ENCODE measurements at regions of chr3 and their contacts with region 1.

Region 1: DNA sequence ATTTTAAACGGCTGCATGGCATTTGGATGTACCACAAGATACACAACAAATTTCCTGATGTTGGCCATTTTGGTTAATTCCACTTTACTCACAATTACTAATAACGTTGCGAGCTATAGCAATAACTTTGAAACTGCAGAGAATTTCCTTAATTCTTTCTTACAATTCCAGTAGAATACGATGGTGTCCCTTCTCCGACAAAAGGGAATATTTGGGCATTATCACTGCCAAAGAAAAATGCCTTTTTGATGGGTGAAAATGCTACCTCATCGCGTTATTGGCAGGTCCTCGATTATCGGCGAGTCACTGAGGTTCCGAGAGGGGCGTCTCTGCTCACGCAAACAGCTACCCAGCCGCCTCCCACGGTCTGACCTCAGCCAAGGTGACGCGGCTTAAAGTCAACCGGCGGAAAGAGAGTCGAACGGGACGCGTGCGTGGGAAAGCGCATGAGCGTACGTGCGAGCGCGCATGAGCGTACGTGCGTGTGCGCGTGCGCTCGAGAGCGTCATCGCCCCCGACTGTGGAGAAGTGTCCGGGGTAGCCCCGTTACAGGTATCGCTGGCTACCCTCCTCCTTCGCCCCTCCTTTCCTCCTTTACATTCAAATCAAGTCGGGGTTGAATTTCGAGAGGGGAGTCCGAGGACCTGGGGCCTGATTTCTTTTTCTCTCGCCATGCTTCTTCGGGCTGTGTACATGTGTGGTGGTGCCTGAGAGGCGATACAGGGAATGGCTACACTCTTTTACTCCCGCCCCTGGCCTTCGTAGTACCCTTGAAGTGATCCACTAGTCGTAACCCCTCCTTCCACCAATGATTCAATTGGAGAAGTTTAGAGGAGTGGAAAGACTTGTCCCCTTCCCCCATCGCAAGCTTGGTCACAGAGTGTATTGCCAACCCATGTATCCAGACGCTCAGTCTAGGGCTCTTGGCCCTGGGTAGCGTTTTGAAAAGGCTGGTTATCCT is at the start of gene OXSM:
- DNase-seq: peak; percentile 89 to 92
- ATAC-seq: peak; percentile 95 to 98
- H3K4me3 ChIP-seq: peak within 1 kb of the TSS; percentile 64 to 84 (median 68)
- H3K27ac ChIP-seq: peak within 1 kb of the TSS; percentile 88 to 98 (median 94)
- H3K4me1 ChIP-seq: peaks cover 26 to 39% of the 10 kb centered on the region in 2 donors
- H3K27me3 ChIP-seq: no peaks in the 10 kb centered on the region
- CTCF ChIP-seq: no peak
- POLR2A ChIP-seq: peak; percentile 96 to 98
- total RNA-seq, gene OXSM: 5.9 to 26.3 (median 13.3) TPM

Region 2: DNA sequence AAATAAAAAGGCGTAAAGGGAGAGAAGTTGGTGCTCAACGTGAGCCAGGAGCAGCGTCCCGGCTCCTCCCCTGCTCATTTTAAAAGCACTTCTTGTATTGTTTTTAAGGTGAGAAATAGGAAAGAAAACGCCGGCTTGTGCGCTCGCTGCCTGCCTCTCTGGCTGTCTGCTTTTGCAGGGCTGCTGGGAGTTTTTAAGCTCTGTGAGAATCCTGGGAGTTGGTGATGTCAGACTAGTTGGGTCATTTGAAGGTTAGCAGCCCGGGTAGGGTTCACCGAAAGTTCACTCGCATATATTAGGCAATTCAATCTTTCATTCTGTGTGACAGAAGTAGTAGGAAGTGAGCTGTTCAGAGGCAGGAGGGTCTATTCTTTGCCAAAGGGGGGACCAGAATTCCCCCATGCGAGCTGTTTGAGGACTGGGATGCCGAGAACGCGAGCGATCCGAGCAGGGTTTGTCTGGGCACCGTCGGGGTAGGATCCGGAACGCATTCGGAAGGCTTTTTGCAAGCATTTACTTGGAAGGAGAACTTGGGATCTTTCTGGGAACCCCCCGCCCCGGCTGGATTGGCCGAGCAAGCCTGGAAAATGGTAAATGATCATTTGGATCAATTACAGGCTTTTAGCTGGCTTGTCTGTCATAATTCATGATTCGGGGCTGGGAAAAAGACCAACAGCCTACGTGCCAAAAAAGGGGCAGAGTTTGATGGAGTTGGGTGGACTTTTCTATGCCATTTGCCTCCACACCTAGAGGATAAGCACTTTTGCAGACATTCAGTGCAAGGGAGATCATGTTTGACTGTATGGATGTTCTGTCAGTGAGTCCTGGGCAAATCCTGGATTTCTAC is 361.7 kb before region 1 on chr3 and contains the start of gene RARB:
- in situ Hi-C with region 1: loop called in 1 of 4 experiments (anchors 25 kb)
- intact Hi-C with region 1: no loop called
- DNase-seq: peak; percentile 40 to 64
- ATAC-seq: peak; percentile 88 to 94
- H3K4me3 ChIP-seq: peak within 1 kb of the TSS; percentile 64 to 83 (median 72)
- H3K27ac ChIP-seq: peak within 1 kb of the TSS; percentile 80 to 88 (median 82)
- H3K4me1 ChIP-seq: peaks cover 19 to 20% of the 10 kb centered on the region in 2 donors
- H3K27me3 ChIP-seq: no peaks in the 10 kb centered on the region
- CTCF ChIP-seq: no peak
- POLR2A ChIP-seq: peak; percentile 70 to 83
- total RNA-seq, gene RARB: 1.2 to 3.0 (median 1.9) TPM

Region 3: GRCh38 chr3:25468866-25469319 is 321.0 kb before region 1 on chr3:
- in situ Hi-C with region 1: loop called in 2 of 4 experiments (anchors 25 kb)
- intact Hi-C with region 1: no loop called
- DNase-seq: peak; percentile 43 to 49
- ATAC-seq: peak; percentile 61 to 70
- H3K4me3 ChIP-seq: no peak overlapping the region
- H3K27ac ChIP-seq: peak overlapping the region in 3 of 4 donors; percentile 70 to 82 (median 77)
- H3K4me1 ChIP-seq: peaks cover 53 to 83% of the 10 kb centered on the region in 2 donors
- H3K27me3 ChIP-seq: no peaks in the 10 kb centered on the region
- CTCF ChIP-seq: peak; percentile 4 to 47 (median 31)
- POLR2A ChIP-seq: no peak

Region 4: GRCh38 chr3:25655659-25656058 is 134.2 kb before region 1 on chr3:
- in situ Hi-C with region 1: loop called in 2 of 4 experiments (anchors 10 kb)
- intact Hi-C with region 1: no loop called
- DNase-seq: no peak
- ATAC-seq: no peak
- H3K4me3 ChIP-seq: no peak overlapping the region
- H3K27ac ChIP-seq: no peak overlapping the region
- H3K4me1 ChIP-seq: peaks cover 70 to 74% of the 10 kb centered on the region in 2 donors
- H3K27me3 ChIP-seq: no peaks in the 10 kb centered on the region
- CTCF ChIP-seq: no peak
- POLR2A ChIP-seq: no peak

Region 5: GRCh38 chr3:26091096-26091495 is 301.2 kb after region 1 on chr3:
- in situ Hi-C with region 1: no loop called
- intact Hi-C with region 1: no loop called
- DNase-seq: no peak
- ATAC-seq: peak in 1 of 2 donors; percentile 86
- H3K4me3 ChIP-seq: no peak overlapping the region
- H3K27ac ChIP-seq: peak overlapping the region in 3 of 4 donors; percentile 0 to 48 (median 33)
- H3K4me1 ChIP-seq: peaks cover 9 to 13% of the 10 kb centered on the region in 2 donors
- H3K27me3 ChIP-seq: no peaks in the 10 kb centered on the region
- CTCF ChIP-seq: no peak
- POLR2A ChIP-seq: no peak

Region 6: DNA sequence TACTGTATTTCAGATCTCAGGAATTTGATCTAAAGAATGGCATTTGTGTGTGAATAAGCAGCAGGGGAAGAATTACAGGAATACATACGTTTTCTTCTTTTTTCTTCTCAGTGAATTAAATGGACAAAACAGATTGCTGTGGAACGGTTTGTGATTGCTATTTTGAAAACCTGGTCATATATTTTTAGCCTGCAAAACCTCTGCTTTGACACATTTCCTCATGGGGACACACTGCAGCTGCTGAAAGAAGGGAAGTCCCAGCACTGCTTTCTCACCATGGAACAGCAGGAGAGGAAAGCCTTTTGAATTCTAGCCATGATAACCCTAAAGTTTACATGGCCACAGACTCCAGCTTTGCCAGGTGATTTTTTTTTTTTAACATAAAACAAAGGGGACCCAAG is 315.0 kb after region 1 on chr3:
- in situ Hi-C with region 1: no loop called
- intact Hi-C with region 1: loop called (anchors 10 kb)
- DNase-seq: no peak
- ATAC-seq: peak in 1 of 2 donors; percentile 20
- H3K4me3 ChIP-seq: no peak overlapping the region
- H3K27ac ChIP-seq: peak overlapping the region in 3 of 4 donors; percentile 1 to 49 (median 32)
- H3K4me1 ChIP-seq: peaks cover 53 to 60% of the 10 kb centered on the region in 2 donors
- H3K27me3 ChIP-seq: no peaks in the 10 kb centered on the region
- CTCF ChIP-seq: no peak
- POLR2A ChIP-seq: no peak

Region 7: GRCh38 chr3:26208201-26208600 is 418.3 kb after region 1 on chr3:
- in situ Hi-C with region 1: no loop called
- intact Hi-C with region 1: no loop called
- DNase-seq: no peak
- ATAC-seq: no peak
- H3K4me3 ChIP-seq: no peak overlapping the region
- H3K27ac ChIP-seq: no peak overlapping the region
- H3K4me1 ChIP-seq: no peaks in the 10 kb centered on the region
- H3K27me3 ChIP-seq: no peaks in the 10 kb centered on the region
- CTCF ChIP-seq: no peak
- POLR2A ChIP-seq: no peak

Measured in gastrocnemius medialis (tissue), 4 donors.